ENCODE measurements at regions of chr3 and their contacts with region 1.

Region 1: GRCh38 chr3:4826237-4827100 is 152.8 kb upstream of the BHLHE40 start:
- DNase-seq: no peak
- ATAC-seq: no peak
- H3K4me3 ChIP-seq: no peak overlapping the region
- H3K27ac ChIP-seq: peak overlapping the region; percentile 16
- H3K4me1 ChIP-seq: peaks cover 45 to 89% of the 10 kb centered on the region in 2 experiments
- H3K27me3 ChIP-seq: no peaks in the 10 kb centered on the region
- CTCF ChIP-seq: no peak
- EP300 ChIP-seq: no peak
- POLR2A ChIP-seq: no peak; the same call in 1 of the 2 replicates
- RAD21 ChIP-seq: no peak

Region 2: GRCh38 chr3:4814305-4814903 is 12.1 kb before region 1 on chr3:
- CTCF ChIA-PET with region 1: no interaction called
- POLR2A ChIA-PET with region 1: interaction called, 61 read pairs
- in situ Hi-C with region 1: no loop called
- intact Hi-C with region 1: no loop called
- DNase-seq: peak; percentile 96 to 99 (median 98)
- ATAC-seq: peak; percentile 93
- H3K4me3 ChIP-seq: peak overlapping the region; percentile 39
- H3K27ac ChIP-seq: peak overlapping the region; percentile 93
- H3K4me1 ChIP-seq: peaks cover 16 to 67% of the 10 kb centered on the region in 2 experiments
- H3K27me3 ChIP-seq: no peaks in the 10 kb centered on the region
- CTCF ChIP-seq: no peak
- EP300 ChIP-seq: peak; percentile 96
- POLR2A ChIP-seq: peak; percentile 84
- RAD21 ChIP-seq: peak in 1 of 2 experiments; percentile 19; a peak in 2 of 4 replicates

Region 3: DNA sequence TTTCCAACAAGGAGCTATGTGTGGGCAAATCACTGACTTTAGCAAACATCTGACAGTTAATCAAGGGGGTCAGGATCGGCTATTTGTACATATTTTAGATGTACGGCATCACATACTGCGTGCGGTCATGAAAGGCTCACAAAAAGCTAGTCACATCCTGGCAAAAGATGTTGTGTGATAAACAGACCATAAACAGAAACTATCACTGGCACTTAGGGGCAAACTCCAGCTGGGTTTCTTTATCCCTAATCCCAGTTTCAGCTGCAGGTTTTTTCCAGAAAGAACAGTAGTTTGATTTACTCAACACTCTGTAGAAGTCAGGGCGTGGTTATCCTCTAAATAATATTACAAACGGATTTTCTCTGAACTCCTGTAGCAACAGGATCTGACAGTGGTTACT is 40.4 kb after region 1 on chr3:
- CTCF ChIA-PET with region 1: no interaction called
- POLR2A ChIA-PET with region 1: interaction called, 10 read pairs
- in situ Hi-C with region 1: no loop called
- intact Hi-C with region 1: no loop called
- DNase-seq: no peak
- ATAC-seq: no peak
- H3K4me3 ChIP-seq: no peak overlapping the region
- H3K27ac ChIP-seq: peak overlapping the region; percentile 96; the same call in 1 of the 3 replicates
- H3K4me1 ChIP-seq: peaks cover 23 to 34% of the 10 kb centered on the region in 2 experiments
- H3K27me3 ChIP-seq: no peaks in the 10 kb centered on the region
- CTCF ChIP-seq: no peak
- EP300 ChIP-seq: no peak
- POLR2A ChIP-seq: no peak
- RAD21 ChIP-seq: peak in 1 of 2 experiments; percentile 12; a peak in 1 of 4 replicates

Measured in K562 (cell line).